CD4-positive, alpha-beta memory T cell (primary cell): ENCODE measurements at regions of chr7 and their contacts with region 1.

Region 1: DNA sequence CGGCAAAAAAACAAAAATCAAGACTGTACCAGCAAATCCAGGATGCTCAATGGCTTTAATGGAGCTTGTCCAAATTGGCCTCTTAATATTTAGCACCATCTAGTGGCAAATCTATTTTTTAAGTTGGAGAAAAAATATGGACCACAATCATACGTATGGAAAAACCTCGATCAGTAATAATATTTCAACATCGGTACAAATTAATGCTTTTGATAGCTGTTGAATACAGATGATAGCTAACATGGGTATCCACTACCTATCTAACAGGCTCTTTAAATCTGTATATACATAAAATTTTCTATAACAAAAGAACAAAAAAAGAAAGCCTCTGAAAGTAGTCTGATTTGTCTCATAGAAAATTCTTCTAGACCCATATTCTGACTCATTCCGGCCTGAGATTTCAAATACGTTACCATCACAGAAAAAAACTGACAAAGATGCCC is 29.2 kb downstream of the COA1 start:
- DNase-seq: peak in 4 of 5 donors; percentile 62 to 70 (median 68)
- H3K4me3 ChIP-seq: no peak overlapping the region
- H3K4me3 Mint-ChIP-seq: peak overlapping the region in 6 of 8 donors; percentile 4 to 53 (median 32)
- H3K27ac ChIP-seq: no peak overlapping the region
- H3K27ac Mint-ChIP-seq: peak overlapping the region in 6 of 7 donors; percentile 48 to 85 (median 70)
- H3K4me1 ChIP-seq: peaks cover 23% of the 10 kb centered on the region
- H3K4me1 Mint-ChIP-seq: peaks cover 15 to 31% (median 19%) of the 10 kb centered on the region in 4 donors
- H3K27me3 ChIP-seq: no peaks in the 10 kb centered on the region
- H3K27me3 Mint-ChIP-seq: no peaks in the 10 kb centered on the region

Region 2: GRCh38 chr7:43572516-43573049 is 127.5 kb before region 1 on chr7:
- CTCF ChIA-PET with region 1: interaction called, 670 read pairs
- POLR2A ChIA-PET with region 1: no interaction called
- intact Hi-C with region 1: no loop called
- DNase-seq: peak in 2 of 5 donors; percentile 21 to 46
- H3K4me3 ChIP-seq: no peak overlapping the region
- H3K4me3 Mint-ChIP-seq: no peak overlapping the region
- H3K27ac ChIP-seq: no peak overlapping the region
- H3K27ac Mint-ChIP-seq: peak overlapping the region in 2 of 7 donors; percentile 23 to 51
- H3K4me1 ChIP-seq: peaks cover 5% of the 10 kb centered on the region
- H3K4me1 Mint-ChIP-seq: peaks cover 3 to 5% (median 4%) of the 10 kb centered on the region in 4 donors
- H3K27me3 ChIP-seq: no peaks in the 10 kb centered on the region
- H3K27me3 Mint-ChIP-seq: no peaks in the 10 kb centered on the region

Region 3: GRCh38 chr7:43618073-43618472 is 82.0 kb before region 1 on chr7:
- CTCF ChIA-PET with region 1: interaction called, 27 read pairs
- POLR2A ChIA-PET with region 1: interaction called, 14 read pairs
- intact Hi-C with region 1: no loop called
- DNase-seq: no peak
- H3K4me3 ChIP-seq: no peak overlapping the region
- H3K4me3 Mint-ChIP-seq: no peak overlapping the region
- H3K27ac ChIP-seq: no peak overlapping the region
- H3K27ac Mint-ChIP-seq: no peak overlapping the region
- H3K4me1 ChIP-seq: peaks cover 99% of the 10 kb centered on the region
- H3K4me1 Mint-ChIP-seq: peaks cover 5 to 52% (median 37%) of the 10 kb centered on the region in 4 donors
- H3K27me3 ChIP-seq: no peaks in the 10 kb centered on the region
- H3K27me3 Mint-ChIP-seq: no peaks in the 10 kb centered on the region

Region 4: GRCh38 chr7:43639858-43640491 is 60.1 kb before region 1 on chr7:
- CTCF ChIA-PET with region 1: interaction called, 70 read pairs
- POLR2A ChIA-PET with region 1: interaction called, 8 read pairs
- intact Hi-C with region 1: no loop called
- DNase-seq: no peak
- H3K4me3 ChIP-seq: no peak overlapping the region
- H3K4me3 Mint-ChIP-seq: peak overlapping the region in 3 of 8 donors; percentile 10 to 31 (median 21)
- H3K27ac ChIP-seq: no peak overlapping the region
- H3K27ac Mint-ChIP-seq: peak overlapping the region; percentile 59 to 88 (median 85)
- H3K4me1 ChIP-seq: peaks cover 99% of the 10 kb centered on the region
- H3K4me1 Mint-ChIP-seq: peaks cover 50 to 94% (median 75%) of the 10 kb centered on the region in 4 donors
- H3K27me3 ChIP-seq: no peaks in the 10 kb centered on the region
- H3K27me3 Mint-ChIP-seq: no peaks in the 10 kb centered on the region

Region 5: DNA sequence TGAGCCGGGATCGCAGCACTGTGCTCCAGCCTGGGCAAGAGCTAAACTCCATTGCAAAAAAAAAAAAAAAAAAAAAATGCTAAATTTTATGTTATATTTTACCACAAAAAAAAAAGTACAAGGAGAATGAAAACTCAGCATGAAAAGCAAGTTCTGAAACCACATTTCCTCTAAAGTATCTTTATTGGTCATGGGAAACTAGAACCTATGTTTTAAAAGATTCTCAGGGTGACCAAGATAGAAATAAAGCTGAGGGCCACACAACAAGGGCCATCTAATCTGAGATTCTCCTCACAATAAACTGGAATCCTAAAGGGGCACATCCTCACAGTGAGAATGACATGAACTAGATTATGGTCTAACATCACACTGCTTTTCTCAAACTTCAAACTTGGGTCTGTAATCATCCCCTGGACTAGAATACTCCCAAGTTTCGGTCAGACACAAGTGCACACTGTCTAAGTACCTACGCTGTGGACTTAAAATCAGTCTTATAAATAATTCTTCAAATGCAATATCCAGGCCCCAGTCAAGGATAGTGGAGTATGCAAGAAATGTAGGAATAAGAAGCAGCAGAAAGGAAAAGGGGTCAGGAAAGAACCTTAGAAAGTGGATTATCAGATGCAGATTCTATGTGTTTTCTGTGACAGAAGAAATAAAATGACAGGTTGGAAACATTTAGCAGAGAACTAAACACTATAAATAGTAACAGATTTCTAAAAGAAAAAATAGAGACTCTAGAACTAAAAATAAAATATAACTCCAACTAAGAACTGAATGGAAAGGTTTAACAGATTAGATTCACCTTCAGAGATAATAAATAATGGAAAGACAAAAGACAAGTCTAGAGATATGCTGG is 20.6 kb before region 1 on chr7:
- CTCF ChIA-PET with region 1: interaction called, 12 read pairs
- POLR2A ChIA-PET with region 1: no interaction called
- intact Hi-C with region 1: no loop called
- DNase-seq: no peak
- H3K4me3 ChIP-seq: no peak overlapping the region
- H3K4me3 Mint-ChIP-seq: peak overlapping the region in 7 of 8 donors; percentile 5 to 71 (median 65)
- H3K27ac ChIP-seq: no peak overlapping the region
- H3K27ac Mint-ChIP-seq: peak overlapping the region; percentile 48 to 84 (median 73)
- H3K4me1 ChIP-seq: peaks cover 56% of the 10 kb centered on the region
- H3K4me1 Mint-ChIP-seq: peaks cover 58 to 83% (median 64%) of the 10 kb centered on the region in 4 donors
- H3K27me3 ChIP-seq: no peaks in the 10 kb centered on the region
- H3K27me3 Mint-ChIP-seq: no peaks in the 10 kb centered on the region

Region 6: DNA sequence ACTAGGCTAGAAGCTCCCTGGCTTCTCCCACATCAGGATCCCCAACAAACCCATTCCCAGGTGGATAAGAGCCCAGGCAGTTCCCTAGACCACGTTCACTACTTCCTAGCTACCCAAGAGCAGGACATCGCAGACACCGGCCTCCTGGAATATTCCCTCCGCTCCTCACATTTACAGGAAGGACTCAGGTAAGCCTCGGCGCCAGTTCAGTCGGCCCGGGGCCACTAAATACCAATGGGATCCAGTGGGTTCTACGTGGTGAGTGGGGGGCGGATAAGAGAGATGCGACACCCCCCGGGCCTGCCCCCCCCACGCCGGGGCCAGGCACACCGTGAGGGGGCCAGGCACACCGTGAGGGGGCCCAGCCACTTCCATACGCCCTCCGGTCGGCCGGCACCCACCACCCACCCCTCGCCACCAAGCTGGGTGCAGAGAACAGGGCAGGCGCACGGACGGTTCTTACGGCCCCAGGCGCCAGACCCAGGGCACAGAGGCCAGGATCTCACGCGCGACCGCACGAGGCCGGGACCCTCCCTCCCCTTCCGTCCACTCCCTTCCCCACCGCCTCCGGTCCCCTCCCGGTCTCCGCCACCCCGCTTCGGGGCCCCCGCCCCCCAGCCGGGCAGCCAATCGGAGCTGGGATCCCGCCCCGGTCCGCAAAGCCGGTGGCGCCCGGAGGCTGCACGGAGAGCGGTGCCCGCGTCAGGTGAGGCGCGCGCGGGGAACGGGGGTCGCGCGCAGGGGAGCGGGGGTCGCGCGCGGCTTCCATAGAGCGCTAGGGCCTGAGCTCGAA is 58.1 kb after region 1 on chr7 and contains the start of gene BLVRA:
- CTCF ChIA-PET with region 1: interaction called, 10 read pairs
- POLR2A ChIA-PET with region 1: no interaction called
- intact Hi-C with region 1: no loop called
- DNase-seq: peak; percentile 59 to 75 (median 69)
- H3K4me3 ChIP-seq: peak within 1 kb of the TSS; percentile 57 to 79
- H3K4me3 Mint-ChIP-seq: peak within 1 kb of the TSS; percentile 86 to 95 (median 91)
- H3K27ac ChIP-seq: peak within 1 kb of the TSS; percentile 77
- H3K27ac Mint-ChIP-seq: peak within 1 kb of the TSS; percentile 79 to 95 (median 89)
- H3K4me1 ChIP-seq: peaks cover 36% of the 10 kb centered on the region
- H3K4me1 Mint-ChIP-seq: peaks cover 22 to 42% (median 34%) of the 10 kb centered on the region in 4 donors
- H3K27me3 ChIP-seq: no peaks in the 10 kb centered on the region
- H3K27me3 Mint-ChIP-seq: no peaks in the 10 kb centered on the region
- total RNA-seq, gene BLVRA: 18.1 to 19.3 TPM